Stomach (tissue), 19 donors: ENCODE measurements at regions of chr6 and their contacts with region 1.

Region 1: DNA sequence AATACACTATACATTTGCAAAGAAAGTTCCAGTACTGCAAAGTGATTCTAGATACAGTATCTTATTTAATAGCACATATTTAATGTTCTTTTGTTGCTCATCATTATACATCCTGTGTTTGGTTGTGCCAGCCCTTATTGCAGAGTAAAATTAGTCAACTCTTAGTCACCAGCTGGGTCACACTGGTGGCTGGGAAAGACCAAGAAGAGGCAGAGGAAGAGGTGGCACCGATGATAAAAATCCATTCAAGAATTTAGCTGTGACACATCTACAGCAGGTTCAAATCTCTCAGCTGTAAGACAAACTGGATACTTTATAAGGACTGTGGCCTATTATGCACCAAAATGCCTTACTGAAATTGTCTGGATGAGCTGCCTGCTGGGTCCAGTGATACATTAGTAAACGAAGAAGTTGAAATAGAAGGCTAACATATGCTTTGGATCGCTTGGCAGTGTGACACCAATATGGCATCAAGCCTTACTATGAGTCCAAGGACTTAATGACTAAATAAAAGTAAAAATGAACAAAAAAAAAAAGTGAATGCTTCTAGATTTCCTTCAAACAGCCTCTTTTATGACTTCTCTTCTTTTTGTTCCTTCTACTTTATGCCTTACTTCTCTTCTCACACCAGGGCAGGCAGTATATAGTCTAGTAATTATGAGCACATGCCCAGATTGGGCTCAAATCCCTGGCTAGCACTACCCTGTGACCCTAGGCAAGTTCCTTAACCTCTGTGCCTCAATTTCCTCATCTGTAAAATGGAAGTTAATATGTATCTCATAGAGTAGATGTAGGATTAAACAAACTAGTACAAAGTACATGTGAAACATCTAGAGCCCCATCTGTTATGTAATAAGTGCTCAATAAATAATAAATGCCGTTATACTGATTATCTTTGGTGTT is 29.4 kb upstream of the RNF8 start:
- DNase-seq: peak in 1 of 2 donors; percentile 29
- H3K4me3 ChIP-seq: no peak overlapping the region
- H3K27ac ChIP-seq: peak overlapping the region in 1 of 5 donors; percentile 57
- H3K4me1 ChIP-seq: peaks cover 0 to 25% (median 8%) of the 10 kb centered on the region in 4 donors
- H3K27me3 ChIP-seq: no peaks in the 10 kb centered on the region
- CTCF ChIP-seq: no peak
- EP300 ChIP-seq: no peak
- POLR2A ChIP-seq: no peak

Region 2: GRCh38 chr6:37566111-37566949 is 241.9 kb after region 1 on chr6:
- intact Hi-C with region 1: loop called (anchors 10 kb)
- DNase-seq: peak; percentile 63 to 82
- H3K4me3 ChIP-seq: peak overlapping the region; percentile 34 to 42 (median 36)
- H3K27ac ChIP-seq: no peak overlapping the region
- H3K4me1 ChIP-seq: peaks cover 10 to 12% (median 12%) of the 10 kb centered on the region in 4 donors
- H3K27me3 ChIP-seq: peaks cover 0 to 78% (median 24%) of the 10 kb centered on the region in 3 donors
- CTCF ChIP-seq: peak in 5 of 7 experiments; percentile 54 to 81 (median 75)
- EP300 ChIP-seq: no peak
- POLR2A ChIP-seq: no peak

Region 3: DNA sequence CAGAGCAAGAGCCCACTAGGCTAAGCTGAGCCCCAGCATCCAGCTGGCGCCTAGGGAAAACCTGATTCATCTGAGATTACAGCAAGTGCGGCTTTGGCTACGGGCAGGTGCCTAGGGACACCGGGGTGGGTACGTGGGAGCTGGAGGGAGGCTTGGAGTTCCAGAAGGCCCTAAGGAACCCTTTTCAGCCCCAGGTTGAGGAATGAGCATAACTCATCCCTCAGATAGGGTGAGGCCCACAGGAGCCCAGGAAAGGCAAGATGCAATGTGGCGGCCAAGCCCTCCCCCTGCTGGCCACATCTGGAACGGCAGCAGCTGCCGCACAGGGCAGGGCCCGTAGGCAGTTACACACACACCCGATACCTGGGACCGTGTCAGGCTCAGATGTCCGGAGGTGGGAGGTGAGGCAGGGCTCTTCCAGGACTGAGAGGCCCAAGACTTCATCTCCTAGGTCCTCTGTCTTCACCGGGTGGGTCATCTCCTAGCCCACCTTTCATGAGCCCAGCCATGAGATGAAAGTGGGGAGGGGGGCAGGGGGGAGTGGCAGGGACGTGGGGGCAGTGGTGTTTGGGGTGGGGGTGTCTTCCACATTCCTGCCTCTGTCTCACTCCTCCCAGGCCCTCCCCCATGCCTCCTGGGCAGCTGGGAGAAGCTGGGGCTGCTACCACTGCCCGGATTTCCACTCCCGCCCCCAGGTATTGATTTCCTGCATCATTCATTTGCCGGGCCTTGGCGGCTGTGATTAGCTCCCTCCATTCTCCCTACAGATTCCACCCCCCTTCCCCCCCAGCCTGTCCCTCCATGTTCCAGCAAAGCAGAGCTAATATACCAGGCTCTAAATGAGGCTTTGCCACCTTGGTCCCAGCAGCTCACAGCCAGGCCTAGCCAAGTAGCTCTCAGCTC is 367.8 kb after region 1 on chr6:
- intact Hi-C with region 1: loop called (anchors 10 kb)
- DNase-seq: peak; percentile 81 to 89
- H3K4me3 ChIP-seq: no peak overlapping the region
- H3K27ac ChIP-seq: no peak overlapping the region
- H3K4me1 ChIP-seq: peaks cover 16 to 37% (median 26%) of the 10 kb centered on the region in 4 donors
- H3K27me3 ChIP-seq: peaks cover 0 to 57% (median 34%) of the 10 kb centered on the region in 3 donors
- CTCF ChIP-seq: peak in 6 of 7 experiments; percentile 66 to 99 (median 96)
- EP300 ChIP-seq: no peak
- POLR2A ChIP-seq: no peak